Caco-2 (cell line): ENCODE measurements at regions of chr13 and their contacts with region 1.

Region 1: DNA sequence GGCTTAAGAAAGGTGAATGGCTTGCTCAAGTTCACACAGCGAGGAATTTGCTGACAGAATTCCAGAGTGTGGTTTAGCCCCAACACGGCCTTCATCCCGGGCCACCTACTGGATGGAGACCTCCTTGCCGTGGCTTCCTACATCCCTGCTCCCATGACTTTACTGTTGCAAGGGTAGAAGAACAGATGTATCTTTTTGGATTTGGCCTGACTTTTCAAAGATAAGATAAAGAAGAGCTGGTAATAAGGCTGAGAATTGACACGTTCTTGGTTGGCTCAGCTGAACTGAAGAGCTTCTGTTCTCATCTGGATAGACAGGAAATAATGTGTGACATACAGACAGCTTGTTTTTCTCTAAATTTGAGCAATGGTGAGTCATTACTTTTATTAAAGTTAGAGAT is 113.1 kb downstream of the KLF5 start:
- DNase-seq: peak; percentile 67 to 81
- H3K4me3 ChIP-seq: no peak overlapping the region
- H3K4me3 Mint-ChIP-seq: peak overlapping the region; percentile 31
- H3K27ac Mint-ChIP-seq: peak overlapping the region; percentile 97
- H3K4me1 ChIP-seq: peaks cover 82% of the 10 kb centered on the region
- H3K4me1 Mint-ChIP-seq: peaks cover 51% of the 10 kb centered on the region
- H3K27me3 ChIP-seq: no peaks in the 10 kb centered on the region
- H3K27me3 Mint-ChIP-seq: no peaks in the 10 kb centered on the region
- CTCF ChIP-seq: peak in 1 of 2 experiments; percentile 61

Region 2: DNA sequence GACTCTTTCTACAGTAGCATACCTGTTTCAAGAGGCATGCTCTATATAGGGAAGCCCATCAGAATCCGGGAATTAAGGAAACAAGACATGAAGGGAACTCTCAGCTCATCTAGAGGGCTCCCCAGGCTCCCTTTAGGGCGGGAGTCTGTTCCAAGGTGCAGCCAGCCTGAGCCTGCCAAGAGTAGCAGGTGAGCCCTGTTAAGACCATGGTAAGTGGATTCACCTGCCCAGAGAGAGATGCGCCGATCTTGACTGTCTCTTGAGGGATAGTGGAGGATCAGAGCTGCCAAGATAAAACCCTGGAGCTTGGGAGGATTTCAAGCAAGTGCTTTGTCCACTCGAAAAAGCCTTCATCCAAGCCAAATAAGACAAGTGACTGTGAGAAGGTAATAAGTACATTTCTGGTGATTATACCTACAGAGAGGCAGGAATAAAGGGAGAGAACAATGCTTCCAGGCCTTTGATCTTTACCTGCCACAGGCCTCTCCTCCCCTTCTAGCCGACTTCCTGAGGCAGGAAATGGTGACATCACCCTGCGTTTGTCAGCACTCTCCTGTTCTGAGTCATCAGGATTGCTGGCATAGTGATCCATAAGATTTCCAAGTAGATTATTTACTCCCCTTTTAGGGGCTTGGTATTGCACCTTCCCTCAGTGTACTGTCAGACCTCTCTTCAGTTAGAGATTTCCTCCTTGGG is 81.7 kb before region 1 on chr13:
- CTCF ChIA-PET with region 1: no interaction called
- POLR2A ChIA-PET with region 1: interaction called, 3 read pairs
- intact Hi-C with region 1: loop called (anchors 1 kb)
- DNase-seq: peak; percentile 82 to 92
- H3K4me3 ChIP-seq: no peak overlapping the region
- H3K4me3 Mint-ChIP-seq: peak overlapping the region; percentile 46
- H3K27ac Mint-ChIP-seq: peak overlapping the region; percentile 96
- H3K4me1 ChIP-seq: peaks cover 15% of the 10 kb centered on the region
- H3K4me1 Mint-ChIP-seq: peaks cover 24% of the 10 kb centered on the region
- H3K27me3 ChIP-seq: no peaks in the 10 kb centered on the region
- H3K27me3 Mint-ChIP-seq: no peaks in the 10 kb centered on the region
- CTCF ChIP-seq: no peak

Region 3: GRCh38 chr13:73210218-73210883 is 38.4 kb after region 1 on chr13:
- CTCF ChIA-PET with region 1: no interaction called
- POLR2A ChIA-PET with region 1: no interaction called
- intact Hi-C with region 1: loop called (anchors 2 kb)
- DNase-seq: peak; percentile 37 to 64
- H3K4me3 ChIP-seq: no peak overlapping the region
- H3K4me3 Mint-ChIP-seq: no peak overlapping the region
- H3K27ac Mint-ChIP-seq: peak overlapping the region; percentile 81
- H3K4me1 ChIP-seq: peaks cover 23% of the 10 kb centered on the region
- H3K4me1 Mint-ChIP-seq: peaks cover 27% of the 10 kb centered on the region
- H3K27me3 ChIP-seq: no peaks in the 10 kb centered on the region
- H3K27me3 Mint-ChIP-seq: no peaks in the 10 kb centered on the region
- CTCF ChIP-seq: no peak

Region 4: GRCh38 chr13:73325711-73326558 is 154.0 kb after region 1 on chr13:
- CTCF ChIA-PET with region 1: no interaction called
- POLR2A ChIA-PET with region 1: no interaction called
- intact Hi-C with region 1: loop called (anchors 2 kb)
- DNase-seq: peak; percentile 64 to 78
- H3K4me3 ChIP-seq: no peak overlapping the region
- H3K4me3 Mint-ChIP-seq: peak overlapping the region; percentile 65
- H3K27ac Mint-ChIP-seq: peak overlapping the region; percentile 75
- H3K4me1 ChIP-seq: peaks cover 42% of the 10 kb centered on the region
- H3K4me1 Mint-ChIP-seq: peaks cover 30% of the 10 kb centered on the region
- H3K27me3 ChIP-seq: no peaks in the 10 kb centered on the region
- H3K27me3 Mint-ChIP-seq: no peaks in the 10 kb centered on the region
- CTCF ChIP-seq: no peak

Region 5: DNA sequence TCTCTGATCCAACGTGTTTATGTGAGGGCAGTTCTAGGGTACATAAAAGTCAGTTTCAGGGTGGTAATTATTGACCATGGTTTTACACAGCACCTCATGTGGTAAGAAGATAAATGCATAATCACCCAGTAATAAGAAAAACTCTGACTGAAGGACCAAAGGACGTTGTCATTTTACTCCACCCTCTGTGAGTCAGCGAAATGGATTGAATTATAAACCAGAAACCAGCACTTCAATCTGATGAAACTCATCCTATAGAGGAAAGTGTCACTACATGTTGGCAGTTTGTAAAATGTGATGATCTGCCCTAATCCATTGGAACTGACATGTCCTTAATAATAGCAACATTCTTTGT is 293.7 kb after region 1 on chr13:
- CTCF ChIA-PET with region 1: interaction called, 12 read pairs
- POLR2A ChIA-PET with region 1: no interaction called
- intact Hi-C with region 1: no loop called
- DNase-seq: no peak
- H3K4me3 ChIP-seq: no peak overlapping the region
- H3K4me3 Mint-ChIP-seq: no peak overlapping the region
- H3K27ac Mint-ChIP-seq: no peak overlapping the region
- H3K4me1 ChIP-seq: peaks cover 7% of the 10 kb centered on the region
- H3K4me1 Mint-ChIP-seq: no peaks in the 10 kb centered on the region
- H3K27me3 ChIP-seq: no peaks in the 10 kb centered on the region
- H3K27me3 Mint-ChIP-seq: no peaks in the 10 kb centered on the region
- CTCF ChIP-seq: no peak